ENCODE measurements at regions of chr13 and their contacts with region 1.

Region 1: GRCh38 chr13:99269627-99270241 is 11.6 kb upstream of the GPR18 start:
- H3K4me3 Mint-ChIP-seq: no peak overlapping the region
- H3K27ac Mint-ChIP-seq: peak overlapping the region; percentile 93
- H3K4me1 Mint-ChIP-seq: peaks cover 59% of the 10 kb centered on the region
- H3K27me3 Mint-ChIP-seq: no peaks in the 10 kb centered on the region

Region 2: DNA sequence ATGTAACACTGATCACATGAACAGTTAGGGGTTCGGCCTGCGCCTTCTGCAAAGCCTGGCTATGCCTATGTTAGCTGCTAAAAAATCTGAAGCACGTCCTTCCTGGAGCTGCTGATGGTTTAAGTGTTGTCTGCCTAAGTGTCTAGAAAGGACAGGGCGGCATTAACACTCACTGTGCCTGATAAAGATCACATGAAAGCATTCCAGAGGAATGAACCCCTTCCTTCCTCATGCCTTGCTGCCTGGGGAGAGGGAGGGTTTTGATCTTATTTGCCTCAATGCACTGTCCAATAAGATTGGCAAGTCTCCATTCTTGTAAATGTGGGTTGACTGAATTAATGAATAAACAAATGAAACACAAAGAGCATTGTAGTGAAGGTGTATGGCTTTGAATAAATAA is 297.1 kb before region 1 on chr13:
- intact Hi-C with region 1: no loop called
- H3K4me3 Mint-ChIP-seq: no peak overlapping the region
- H3K27ac Mint-ChIP-seq: no peak overlapping the region
- H3K4me1 Mint-ChIP-seq: peaks cover 6% of the 10 kb centered on the region
- H3K27me3 Mint-ChIP-seq: peaks cover 48% of the 10 kb centered on the region

Region 3: GRCh38 chr13:99307648-99308339 is 38.1 kb after region 1 on chr13:
- intact Hi-C with region 1: loop called (anchors 5 kb)
- H3K4me3 Mint-ChIP-seq: peak overlapping the region; percentile 87
- H3K27ac Mint-ChIP-seq: peak overlapping the region; percentile 94
- H3K4me1 Mint-ChIP-seq: peaks cover 71% of the 10 kb centered on the region
- H3K27me3 Mint-ChIP-seq: no peaks in the 10 kb centered on the region

Region 4: GRCh38 chr13:99374994-99375737 is 105.4 kb after region 1 on chr13:
- intact Hi-C with region 1: loop called (anchors 1 kb)
- H3K4me3 Mint-ChIP-seq: peak overlapping the region; percentile 23
- H3K27ac Mint-ChIP-seq: peak overlapping the region; percentile 88
- H3K4me1 Mint-ChIP-seq: peaks cover 89% of the 10 kb centered on the region
- H3K27me3 Mint-ChIP-seq: no peaks in the 10 kb centered on the region

Region 5: GRCh38 chr13:99436686-99437416 is 167.1 kb after region 1 on chr13:
- intact Hi-C with region 1: loop called (anchors 1 kb)
- H3K4me3 Mint-ChIP-seq: peak overlapping the region; percentile 61
- H3K27ac Mint-ChIP-seq: peak overlapping the region; percentile 81
- H3K4me1 Mint-ChIP-seq: peaks cover 52% of the 10 kb centered on the region
- H3K27me3 Mint-ChIP-seq: peaks cover 22% of the 10 kb centered on the region

Measured in dendritic cell treated with granulocyte-macrophage colony-stimulating factor and Interleukin-4, amounts not matched to agents 40 ng/mL and 50 ng/mL, for 4 days (primary cell).